GM10248 (cell line): ENCODE measurements at regions of chr2 and their contacts with region 1.

Region 1: GRCh38 chr2:127365211-127365643 is 22.5 kb downstream of the MAP3K2 start:
- DNase-seq: no peak
- CTCF ChIP-seq: no peak

Region 2: GRCh38 chr2:127293748-127294562 is 71.3 kb before region 1 on chr2 and contains the start of gene ERCC3:
- CTCF ChIA-PET with region 1: no interaction called
- POLR2A ChIA-PET with region 1: no interaction called
- DNase-seq: peak; percentile 96
- CTCF ChIP-seq: no peak

Region 3: GRCh38 chr2:127377262-127377661 is 12.0 kb after region 1 on chr2:
- CTCF ChIA-PET with region 1: interaction called, 10 read pairs
- POLR2A ChIA-PET with region 1: no interaction called
- DNase-seq: no peak
- CTCF ChIP-seq: no peak